PC-9 (cell line): ENCODE measurements at regions of chr20 and their contacts with region 1.

Region 1: DNA sequence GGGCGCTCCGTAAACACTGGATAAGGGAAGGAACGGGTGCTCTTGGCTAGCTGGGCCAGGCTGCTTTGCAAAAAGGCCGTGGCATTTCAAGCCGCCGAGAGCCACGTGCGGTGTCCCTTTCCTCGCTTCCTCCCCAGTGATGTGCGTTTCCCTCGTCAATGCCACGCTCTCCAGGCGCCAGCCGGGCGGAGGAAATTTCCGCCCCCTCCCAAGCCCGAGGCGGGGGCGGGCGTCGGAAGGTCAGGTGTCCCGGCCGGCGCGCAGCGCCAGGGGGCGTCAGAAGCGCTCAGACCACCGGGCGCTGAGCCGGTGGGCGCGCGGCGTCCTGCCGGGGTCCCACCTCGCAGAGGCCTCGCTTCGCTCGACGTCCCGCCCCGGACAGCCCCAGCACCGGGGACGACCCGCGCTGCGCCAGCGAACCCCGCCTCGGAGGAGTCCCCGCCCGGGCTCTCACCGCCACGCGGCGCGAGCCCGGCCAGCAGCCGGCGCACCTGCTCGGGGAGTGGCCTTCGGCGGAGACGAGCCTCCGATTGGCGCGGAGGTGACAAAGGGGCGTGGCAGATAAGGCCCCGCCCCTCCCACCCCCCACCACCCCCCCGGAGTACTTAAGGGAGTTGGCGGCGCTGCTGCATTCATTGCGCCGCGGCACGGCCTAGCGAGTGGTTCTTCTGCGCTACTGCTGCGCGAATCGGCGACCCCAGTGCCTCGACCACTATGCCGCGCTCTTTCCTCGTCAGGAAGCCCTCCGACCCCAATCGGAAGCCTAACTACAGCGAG is at the start of gene SNAI1:
- DNase-seq: peak; percentile 82 to 88
- H3K4me3 ChIP-seq: peak within 1 kb of the TSS; percentile 75
- H3K27ac ChIP-seq: no peak within 1 kb of the TSS
- H3K4me1 ChIP-seq: peaks cover 10% of the 10 kb centered on the region
- H3K27me3 ChIP-seq: no peaks in the 10 kb centered on the region
- CTCF ChIP-seq: peak; percentile 68
- total RNA-seq, gene SNAI1: 2.2 and 3.6 TPM in 2 replicates

Region 2: DNA sequence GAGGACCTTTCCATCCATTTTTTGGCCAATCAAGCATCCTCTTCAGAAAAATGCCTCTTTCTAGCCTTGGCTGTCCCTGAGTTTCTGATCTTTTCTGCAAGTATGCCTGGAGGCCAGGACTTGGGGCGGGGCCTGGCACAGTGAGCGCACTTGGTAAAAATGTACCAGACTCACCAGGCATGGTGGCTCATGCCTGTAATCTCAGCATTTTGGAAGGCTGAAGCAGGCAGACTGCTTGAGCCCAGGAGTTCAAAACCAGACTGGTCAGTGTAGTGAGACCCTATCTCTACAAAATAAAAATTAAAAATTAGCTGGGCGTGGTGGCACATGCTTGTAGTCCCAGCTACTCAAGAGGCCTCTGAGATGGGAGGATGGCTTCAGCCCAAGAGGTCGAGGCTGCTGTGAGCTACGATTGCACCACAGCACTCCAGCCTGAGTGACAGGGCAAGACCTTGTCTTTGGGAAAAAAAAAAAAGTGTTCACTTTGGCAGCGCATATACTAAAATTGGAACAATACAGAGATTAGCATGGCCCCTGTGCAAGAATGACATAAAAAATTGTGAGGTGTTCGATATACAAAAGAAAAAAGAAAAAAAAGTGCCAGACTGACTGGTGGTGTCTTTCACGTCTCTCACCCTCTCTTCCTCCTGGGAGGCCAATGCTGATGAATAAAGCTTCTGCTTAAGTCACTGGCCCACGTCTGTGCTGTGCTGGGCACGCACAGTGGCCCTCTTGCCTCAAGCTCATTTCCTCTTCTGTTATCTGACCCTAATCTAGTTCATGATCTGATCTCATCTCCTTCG is 188.0 kb before region 1 on chr20:
- CTCF ChIA-PET with region 1: no interaction called
- POLR2A ChIA-PET with region 1: no interaction called
- intact Hi-C with region 1: no loop called
- DNase-seq: peak; percentile 57 to 66
- H3K4me3 ChIP-seq: no peak overlapping the region
- H3K27ac ChIP-seq: peak overlapping the region; percentile 43
- H3K4me1 ChIP-seq: peaks cover 48% of the 10 kb centered on the region
- H3K27me3 ChIP-seq: no peaks in the 10 kb centered on the region
- CTCF ChIP-seq: no peak

Region 3: DNA sequence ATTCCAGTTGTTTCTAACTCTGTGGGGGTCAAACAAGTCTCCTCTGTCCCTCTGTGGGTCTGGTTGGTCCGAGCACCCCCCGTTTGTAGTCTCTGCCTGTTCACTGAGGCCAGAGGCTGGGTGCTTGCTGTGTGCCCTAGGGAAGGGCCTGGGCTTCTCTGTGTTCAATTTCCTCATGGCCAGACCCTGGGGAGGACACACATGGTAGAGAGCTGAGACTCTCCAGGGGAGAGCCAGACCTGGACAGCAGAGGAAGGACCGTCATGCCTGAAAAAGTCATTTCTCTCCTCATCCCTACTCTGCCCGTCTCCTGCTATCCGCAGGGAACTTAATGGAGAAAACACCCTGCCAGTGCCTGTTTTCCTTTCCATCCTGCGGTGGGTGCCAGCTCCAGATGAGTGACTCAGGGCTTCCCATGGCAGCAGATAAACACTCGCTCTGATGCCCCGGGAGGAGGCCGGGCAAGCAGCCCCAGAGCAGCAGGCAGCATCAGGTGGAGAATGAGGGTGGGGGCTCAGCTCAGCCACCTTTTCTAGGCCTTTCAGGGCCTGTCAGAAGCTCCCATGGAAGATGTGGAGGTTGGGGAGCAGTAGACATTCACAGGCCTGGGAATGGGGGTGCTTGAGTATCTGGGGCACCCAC is 52.2 kb after region 1 on chr20:
- CTCF ChIA-PET with region 1: interaction called, 9 read pairs
- POLR2A ChIA-PET with region 1: no interaction called
- intact Hi-C with region 1: loop called (anchors 5 kb)
- DNase-seq: peak in 1 of 2 experiments; percentile 65
- H3K4me3 ChIP-seq: no peak overlapping the region
- H3K27ac ChIP-seq: peak overlapping the region; percentile 70
- H3K4me1 ChIP-seq: peaks cover 56% of the 10 kb centered on the region
- H3K27me3 ChIP-seq: no peaks in the 10 kb centered on the region
- CTCF ChIP-seq: no peak

Region 4: DNA sequence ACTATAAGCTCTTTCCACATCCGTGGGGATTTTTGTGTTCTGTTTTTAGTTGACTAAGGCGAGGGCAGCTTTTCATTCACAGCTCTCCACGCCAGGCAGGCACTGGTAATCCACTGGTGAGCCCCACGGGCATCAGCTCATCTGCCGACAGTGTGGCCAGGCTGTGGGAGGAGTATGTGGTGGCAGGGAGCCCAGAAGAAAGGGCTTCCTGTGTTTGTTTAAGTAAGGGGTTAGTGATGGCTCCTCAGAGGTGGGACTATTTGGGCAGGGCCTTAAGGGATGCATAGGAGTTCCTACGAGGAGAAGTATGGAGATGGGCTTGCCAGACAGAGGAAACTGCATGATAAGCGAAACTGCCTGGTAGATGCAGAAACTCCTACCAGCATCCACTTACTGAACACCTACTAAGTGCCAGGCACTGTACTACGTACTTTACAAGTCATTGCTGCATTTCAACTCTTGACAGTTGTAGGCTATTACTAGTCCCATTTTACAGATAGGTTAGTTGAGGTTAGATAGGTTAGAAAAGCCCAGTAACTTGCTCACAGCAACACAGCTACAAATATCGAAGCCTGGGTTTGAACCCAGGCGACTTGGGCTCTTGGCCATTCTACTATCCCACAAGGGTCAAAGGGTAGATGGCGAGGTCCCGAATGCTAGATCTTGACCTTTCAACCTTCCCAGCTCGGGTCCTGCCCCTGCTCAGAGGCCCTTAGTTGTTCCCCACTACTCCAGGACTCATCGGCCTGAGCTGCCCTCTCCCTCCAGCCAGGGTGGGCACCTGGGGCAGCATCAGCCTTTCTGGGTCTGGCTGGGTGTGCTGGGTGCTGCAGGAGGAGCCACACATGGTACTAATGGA is 263.2 kb after region 1 on chr20:
- CTCF ChIA-PET with region 1: interaction called, 28 read pairs
- POLR2A ChIA-PET with region 1: no interaction called
- intact Hi-C with region 1: no loop called
- DNase-seq: peak in 1 of 2 experiments; percentile 64
- H3K4me3 ChIP-seq: peak overlapping the region; percentile 49; the same call in 1 of the 2 replicates
- H3K27ac ChIP-seq: peak overlapping the region; percentile 99
- H3K4me1 ChIP-seq: peaks cover 100% of the 10 kb centered on the region
- H3K27me3 ChIP-seq: no peaks in the 10 kb centered on the region
- CTCF ChIP-seq: no peak